ENCODE measurements at regions of chr9 and their contacts with region 1.

Region 1: GRCh38 chr9:129737479-129738274 is 15.2 kb downstream of the PTGES start:
- DNase-seq: peak; percentile 81
- ATAC-seq: peak; percentile 91
- H3K4me3 Mint-ChIP-seq: peak overlapping the region; percentile 70
- H3K27ac Mint-ChIP-seq: no peak overlapping the region
- H3K4me1 Mint-ChIP-seq: peaks cover 10% of the 10 kb centered on the region
- H3K27me3 Mint-ChIP-seq: peaks cover 6% of the 10 kb centered on the region
- CTCF ChIP-seq: peak; percentile 82

Region 2: DNA sequence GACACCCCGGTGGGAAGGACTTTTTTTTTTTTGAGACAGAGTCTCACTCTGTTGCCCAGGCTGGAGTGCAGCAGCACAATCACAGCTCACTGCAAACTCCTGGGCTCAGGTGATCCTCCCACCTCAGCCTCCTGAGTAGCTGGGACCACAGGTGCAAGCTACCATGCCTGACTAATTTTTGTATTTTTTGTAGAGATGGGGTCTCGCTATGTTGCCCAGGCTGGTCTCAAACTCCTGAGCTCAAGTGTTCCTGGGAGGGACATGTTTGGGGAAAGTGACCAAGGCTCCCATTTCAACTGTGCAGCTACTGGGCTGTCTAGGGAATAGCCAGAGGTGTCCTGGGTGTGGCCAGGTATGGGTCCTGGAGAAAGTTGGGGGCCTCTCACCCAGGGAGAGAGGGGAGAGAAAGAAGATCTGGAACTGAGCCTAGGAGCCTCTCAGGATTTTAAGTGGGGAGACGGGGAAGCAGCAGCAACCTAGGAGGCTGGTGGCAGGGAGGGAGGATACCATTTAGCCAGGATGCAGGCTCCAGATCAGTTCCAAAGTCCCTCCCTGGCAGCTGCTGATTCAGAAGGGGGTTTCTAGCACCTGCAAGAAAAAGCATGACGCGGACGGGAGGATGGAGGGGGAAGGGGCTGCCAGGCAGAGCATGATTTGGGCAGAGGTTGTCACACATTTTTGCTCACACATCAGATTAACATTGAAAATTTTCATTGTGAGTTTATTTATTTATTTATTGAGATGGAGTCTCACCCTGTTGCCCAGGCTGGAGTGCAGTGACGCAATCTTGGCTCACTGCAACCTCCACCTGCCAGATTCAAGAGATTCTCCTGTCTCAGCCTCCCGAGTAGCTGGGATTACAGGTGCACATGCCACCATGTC is 58.6 kb after region 1 on chr9:
- CTCF ChIA-PET with region 1: interaction called, 15 read pairs
- POLR2A ChIA-PET with region 1: interaction called, 8 read pairs
- intact Hi-C with region 1: loop called (anchors 2 kb)
- DNase-seq: no peak
- ATAC-seq: no peak
- H3K4me3 Mint-ChIP-seq: no peak overlapping the region
- H3K27ac Mint-ChIP-seq: no peak overlapping the region
- H3K4me1 Mint-ChIP-seq: no peaks in the 10 kb centered on the region
- H3K27me3 Mint-ChIP-seq: peaks cover 9% of the 10 kb centered on the region
- CTCF ChIP-seq: no peak

Region 3: GRCh38 chr9:130343445-130343918 is 605.8 kb after region 1 on chr9:
- CTCF ChIA-PET with region 1: no interaction called
- POLR2A ChIA-PET with region 1: no interaction called
- intact Hi-C with region 1: loop called (anchors 5 kb)
- DNase-seq: no peak
- ATAC-seq: peak; percentile 18
- H3K4me3 Mint-ChIP-seq: no peak overlapping the region
- H3K27ac Mint-ChIP-seq: no peak overlapping the region
- H3K4me1 Mint-ChIP-seq: no peaks in the 10 kb centered on the region
- H3K27me3 Mint-ChIP-seq: no peaks in the 10 kb centered on the region
- CTCF ChIP-seq: no peak

Measured in activated B cell treated with CpG ODN at 0.5 μM for 24 hours (primary cell).